HAP-1 (cell line): ENCODE measurements at regions of chr7 and their contacts with region 1.

Region 1: DNA sequence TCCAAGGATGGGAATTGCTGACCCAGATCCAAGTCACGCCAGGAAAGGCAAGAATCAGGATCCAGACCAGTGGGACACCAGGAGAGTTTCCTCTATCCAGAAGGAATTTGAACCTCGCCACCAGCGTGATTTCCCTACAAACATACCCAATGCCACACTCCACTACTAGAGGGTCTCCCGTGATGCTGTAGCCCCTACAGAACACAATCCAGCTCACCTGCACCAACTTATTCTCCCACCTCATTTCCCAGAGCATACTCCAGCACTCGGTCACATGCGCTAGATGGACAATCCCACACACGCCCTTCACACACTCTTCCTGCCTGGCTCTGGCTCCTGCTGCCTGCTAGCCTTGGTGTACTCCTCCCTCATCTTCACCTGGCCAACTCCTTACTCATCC is 142.1 kb upstream of the PDE1C start:
- DNase-seq: no peak
- H3K4me3 ChIP-seq: no peak overlapping the region
- H3K4me1 ChIP-seq: no peaks in the 10 kb centered on the region
- H3K27me3 ChIP-seq: no peaks in the 10 kb centered on the region

Region 2: DNA sequence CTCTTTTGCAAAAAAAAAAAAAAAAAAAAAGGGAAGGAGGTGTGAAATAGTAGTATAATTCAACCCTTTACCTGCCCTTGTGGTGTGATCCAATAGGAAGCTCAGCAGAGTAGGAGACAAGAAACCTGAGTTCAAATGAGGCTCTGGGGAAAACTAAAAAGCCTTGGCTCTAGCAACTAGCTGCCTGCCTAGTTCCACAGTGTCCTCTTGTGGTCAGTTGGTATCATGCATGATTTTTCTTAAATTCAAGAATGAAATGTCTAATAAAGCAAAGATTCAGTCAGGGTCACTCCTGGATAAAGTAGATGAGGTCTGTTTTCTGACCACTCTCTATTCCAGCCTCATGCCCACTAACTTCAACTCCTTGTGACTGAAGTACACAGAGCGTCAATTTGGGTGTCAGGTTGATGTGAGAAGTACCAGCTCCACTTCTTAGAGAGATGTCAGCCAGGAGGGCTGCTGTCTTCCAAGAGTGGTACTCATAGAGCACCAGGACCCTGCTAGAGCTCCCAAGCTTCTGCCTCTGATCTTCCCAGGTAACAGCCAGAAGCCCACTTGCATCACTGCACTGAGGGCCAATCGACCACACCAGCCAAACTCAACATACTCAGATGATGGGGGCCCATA is 267.4 kb after region 1 on chr7:
- in situ Hi-C with region 1: loop called (anchors 5 kb)
- DNase-seq: peak; percentile 50 to 53
- H3K4me3 ChIP-seq: no peak overlapping the region
- H3K4me1 ChIP-seq: no peaks in the 10 kb centered on the region
- H3K27me3 ChIP-seq: no peaks in the 10 kb centered on the region